Left ventricle myocardium inferior (tissue), 1 donor: ENCODE measurements at regions of chr20 and their contacts with region 1.

Region 1: DNA sequence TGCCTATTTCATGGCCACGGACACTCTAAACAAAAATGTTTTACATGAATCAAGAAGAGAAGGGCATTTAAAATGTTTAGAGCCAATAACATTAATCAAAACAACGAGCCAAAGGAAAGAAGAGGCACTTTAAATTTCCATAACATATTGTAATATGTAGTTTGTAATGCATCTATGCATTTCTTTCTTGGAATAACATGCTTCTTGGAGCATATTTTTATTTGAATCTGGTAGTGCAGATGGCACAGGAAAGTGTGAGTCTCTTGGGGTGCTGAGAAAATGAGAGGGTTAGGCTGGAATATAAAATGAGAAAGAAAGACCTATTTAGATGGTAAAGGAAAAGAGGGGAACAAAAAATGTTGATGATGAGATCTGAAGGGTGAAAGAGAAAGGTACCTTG is 305.4 kb downstream of the BTBD3 start:
- DNase-seq: no peak
- H3K4me3 ChIP-seq: no peak overlapping the region
- H3K27ac ChIP-seq: no peak overlapping the region
- H3K4me1 ChIP-seq: no peaks in the 10 kb centered on the region
- H3K27me3 ChIP-seq: no peaks in the 10 kb centered on the region
- CTCF ChIP-seq: no peak

Region 2: GRCh38 chr20:11676630-11677284 is 546.3 kb before region 1 on chr20:
- intact Hi-C with region 1: loop called (anchors 10 kb)
- DNase-seq: no peak
- H3K4me3 ChIP-seq: no peak overlapping the region
- H3K27ac ChIP-seq: peak overlapping the region; percentile 37
- H3K4me1 ChIP-seq: no peaks in the 10 kb centered on the region
- H3K27me3 ChIP-seq: no peaks in the 10 kb centered on the region
- CTCF ChIP-seq: peak; percentile 84

Region 3: DNA sequence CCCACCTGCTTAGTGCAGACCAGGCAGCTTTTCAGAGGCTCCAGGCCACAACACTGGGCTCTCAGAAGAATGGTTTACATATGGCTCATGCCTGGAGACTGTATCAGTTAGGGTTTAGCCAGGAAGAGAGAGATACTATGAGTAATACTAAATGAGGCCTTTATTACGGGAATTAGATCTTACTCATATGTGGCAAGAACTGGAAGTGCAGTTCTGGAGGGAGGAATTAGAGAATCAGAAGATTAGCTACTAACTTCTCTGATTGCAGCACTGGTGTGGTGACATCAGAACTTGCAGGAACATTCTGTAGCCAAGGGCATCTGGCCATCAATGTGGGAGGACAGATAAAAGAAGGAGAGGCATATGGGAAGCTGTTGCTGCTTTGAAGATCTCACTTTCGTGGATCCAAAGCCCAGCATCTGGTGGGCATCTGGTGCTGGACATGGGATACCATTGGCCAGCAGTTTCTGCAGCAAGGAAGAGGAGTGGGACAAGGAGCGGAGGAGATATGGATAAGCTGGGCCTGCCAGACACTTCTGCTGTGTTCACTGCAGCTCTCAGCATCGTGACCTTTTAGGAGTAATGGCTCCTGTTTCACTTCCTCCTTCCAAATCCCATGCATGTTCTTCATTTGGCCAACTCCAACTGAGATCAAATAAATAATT is 56.9 kb before region 1 on chr20:
- intact Hi-C with region 1: no loop called
- DNase-seq: peak; percentile 67
- H3K4me3 ChIP-seq: no peak overlapping the region
- H3K27ac ChIP-seq: peak overlapping the region; percentile 71
- H3K4me1 ChIP-seq: no peaks in the 10 kb centered on the region
- H3K27me3 ChIP-seq: no peaks in the 10 kb centered on the region
- CTCF ChIP-seq: peak; percentile 32

Region 4: GRCh38 chr20:12414446-12415187 is 191.6 kb after region 1 on chr20:
- intact Hi-C with region 1: no loop called
- DNase-seq: no peak
- H3K4me3 ChIP-seq: no peak overlapping the region
- H3K27ac ChIP-seq: peak overlapping the region; percentile 16
- H3K4me1 ChIP-seq: no peaks in the 10 kb centered on the region
- H3K27me3 ChIP-seq: no peaks in the 10 kb centered on the region
- CTCF ChIP-seq: no peak